ENCODE measurements at regions of chr18 and their contacts with region 1.

Region 1: DNA sequence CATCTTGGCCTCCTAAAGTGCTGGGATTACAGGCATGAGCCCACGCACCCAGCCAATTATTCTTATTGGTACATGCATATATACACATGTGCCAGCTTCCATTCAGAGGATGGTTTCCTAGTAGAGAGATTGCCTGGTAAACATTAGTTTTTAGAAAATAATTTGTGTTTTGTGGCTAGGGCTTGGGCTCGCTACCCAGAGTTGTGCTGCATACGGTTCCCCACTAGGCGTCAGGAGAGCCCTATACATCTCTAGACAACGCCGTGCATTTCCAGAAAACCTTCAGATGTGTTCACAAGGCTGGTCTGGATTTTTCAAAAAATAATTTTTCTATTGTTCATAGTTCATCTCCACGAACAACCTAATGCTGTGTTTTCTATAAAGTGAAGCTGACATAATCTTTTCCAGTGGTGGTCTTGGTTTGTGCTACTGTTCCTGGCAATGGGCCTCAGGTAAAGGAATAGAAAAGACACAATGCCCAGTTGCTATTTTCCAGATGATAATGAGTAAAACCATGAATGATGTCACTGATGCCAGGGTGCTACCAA is 14.7 kb upstream of the AFG3L2 start:
- DNase-seq: peak; percentile 26
- H3K4me3 Mint-ChIP-seq: no peak overlapping the region
- H3K27ac Mint-ChIP-seq: no peak overlapping the region
- H3K4me1 Mint-ChIP-seq: peaks cover 5% of the 10 kb centered on the region
- H3K27me3 Mint-ChIP-seq: peaks cover 4% of the 10 kb centered on the region

Region 2: GRCh38 chr18:12543697-12544096 is 152.0 kb after region 1 on chr18:
- intact Hi-C with region 1: loop called (anchors 5 kb)
- DNase-seq: no peak
- H3K4me3 Mint-ChIP-seq: no peak overlapping the region
- H3K27ac Mint-ChIP-seq: no peak overlapping the region
- H3K4me1 Mint-ChIP-seq: peaks cover 9% of the 10 kb centered on the region
- H3K27me3 Mint-ChIP-seq: peaks cover 19% of the 10 kb centered on the region

Region 3: GRCh38 chr18:12702221-12703095 is 310.8 kb after region 1 on chr18 and contains the starts of genes CEP76 and PSMG2:
- intact Hi-C with region 1: loop called (anchors 5 kb)
- DNase-seq: peak; percentile 80
- H3K4me3 Mint-ChIP-seq: peak within 1 kb of the TSS; percentile 97
- H3K27ac Mint-ChIP-seq: peak within 1 kb of the TSS; percentile 92
- H3K4me1 Mint-ChIP-seq: peaks cover 54% of the 10 kb centered on the region
- H3K27me3 Mint-ChIP-seq: no peaks in the 10 kb centered on the region
- total RNA-seq, gene CEP76: 16.1 and 17.5 TPM in 2 replicates
- total RNA-seq, gene PSMG2: 113 and 118 TPM in 2 replicates

Measured in activated T-helper 1 cell treated with anti-CD3 and anti-CD28 coated beads, Interleukin-12 subunit alpha, Interleukin-12 subunit beta, Interleukin-2, Interleukin-4 antibody, amounts not matched to agents 30 ng/mL and 10 ng/mL and 1 ng/mL, durations not matched to agents 14 hours and 24 hours and 36 hours (primary cell).